ENCODE measurements at regions of chr4 and their contacts with region 1.

Region 1: GRCh38 chr4:1579901-1580691 is 104.0 kb downstream of the FAM53A start:
- DNase-seq: peak; percentile 88 to 97 (median 93)
- ATAC-seq: peak; percentile 82
- H3K4me3 ChIP-seq: peak overlapping the region; percentile 73
- H3K4me3 Mint-ChIP-seq: peak overlapping the region; percentile 86
- H3K27ac ChIP-seq: peak overlapping the region in 1 of 2 donors; percentile 65
- H3K27ac Mint-ChIP-seq: peak overlapping the region; percentile 63
- H3K4me1 ChIP-seq: peaks cover 14% of the 10 kb centered on the region
- H3K4me1 Mint-ChIP-seq: no peaks in the 10 kb centered on the region
- H3K27me3 ChIP-seq: no peaks in the 10 kb centered on the region
- H3K27me3 Mint-ChIP-seq: no peaks in the 10 kb centered on the region
- CTCF ChIP-seq: no peak

Region 2: GRCh38 chr4:1403591-1404572 is 176.2 kb before region 1 on chr4:
- CTCF ChIA-PET with region 1: no interaction called
- POLR2A ChIA-PET with region 1: no interaction called
- intact Hi-C with region 1: no loop called
- DNase-seq: peak in 1 of 14 experiments; percentile 11
- ATAC-seq: no peak
- H3K4me3 ChIP-seq: no peak overlapping the region
- H3K4me3 Mint-ChIP-seq: no peak overlapping the region
- H3K27ac ChIP-seq: no peak overlapping the region
- H3K27ac Mint-ChIP-seq: no peak overlapping the region
- H3K4me1 ChIP-seq: peaks cover 22% of the 10 kb centered on the region
- H3K4me1 Mint-ChIP-seq: no peaks in the 10 kb centered on the region
- H3K27me3 ChIP-seq: peaks cover 42 to 59% of the 10 kb centered on the region in 2 experiments
- H3K27me3 Mint-ChIP-seq: peaks cover 35% of the 10 kb centered on the region
- CTCF ChIP-seq: no peak

Region 3: DNA sequence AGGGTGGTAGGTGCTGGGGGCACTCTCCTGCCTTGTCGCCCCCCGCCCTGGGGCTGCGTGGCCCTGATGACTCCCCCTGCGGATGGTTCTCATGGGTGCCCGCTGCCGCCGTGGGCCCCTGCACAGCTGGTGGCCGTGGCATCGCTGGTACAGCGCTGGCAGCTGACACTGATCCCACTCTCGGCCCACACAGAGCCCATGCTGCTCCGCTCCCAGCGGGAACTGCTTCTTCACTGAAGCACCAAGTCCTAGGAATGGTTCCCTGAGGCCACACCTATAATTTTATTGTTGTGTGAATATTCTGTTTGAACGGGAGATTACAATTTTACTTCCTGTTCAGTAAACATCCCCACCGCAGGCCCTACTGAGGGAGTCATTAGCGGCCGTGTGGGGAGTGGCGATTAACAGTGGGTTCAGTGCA is 35.2 kb before region 1 on chr4:
- CTCF ChIA-PET with region 1: no interaction called
- POLR2A ChIA-PET with region 1: no interaction called
- intact Hi-C with region 1: loop called in 1 of 2 experiments (anchors 2 kb)
- DNase-seq: peak in 6 of 14 experiments; percentile 16 to 65 (median 34)
- ATAC-seq: peak; percentile 38
- H3K4me3 ChIP-seq: no peak overlapping the region
- H3K4me3 Mint-ChIP-seq: peak overlapping the region; percentile 66
- H3K27ac ChIP-seq: no peak overlapping the region
- H3K27ac Mint-ChIP-seq: peak overlapping the region; percentile 85
- H3K4me1 ChIP-seq: peaks cover 54% of the 10 kb centered on the region
- H3K4me1 Mint-ChIP-seq: peaks cover 18% of the 10 kb centered on the region
- H3K27me3 ChIP-seq: no peaks in the 10 kb centered on the region
- H3K27me3 Mint-ChIP-seq: peaks cover 7% of the 10 kb centered on the region
- CTCF ChIP-seq: no peak

Region 4: GRCh38 chr4:1604711-1605205 is 24.7 kb after region 1 on chr4:
- CTCF ChIA-PET with region 1: no interaction called
- POLR2A ChIA-PET with region 1: interaction called, 28 read pairs
- intact Hi-C with region 1: loop called in 1 of 2 experiments (anchors 1 kb)
- DNase-seq: peak in 11 of 14 experiments; percentile 39 to 87 (median 63)
- ATAC-seq: peak; percentile 80
- H3K4me3 ChIP-seq: peak overlapping the region; percentile 43
- H3K4me3 Mint-ChIP-seq: peak overlapping the region; percentile 74
- H3K27ac ChIP-seq: peak overlapping the region in 1 of 2 donors; percentile 29
- H3K27ac Mint-ChIP-seq: peak overlapping the region; percentile 85
- H3K4me1 ChIP-seq: peaks cover 46% of the 10 kb centered on the region
- H3K4me1 Mint-ChIP-seq: peaks cover 21% of the 10 kb centered on the region
- H3K27me3 ChIP-seq: no peaks in the 10 kb centered on the region
- H3K27me3 Mint-ChIP-seq: no peaks in the 10 kb centered on the region
- CTCF ChIP-seq: peak; percentile 52

Region 5: GRCh38 chr4:1666391-1666790 is 86.3 kb after region 1 on chr4:
- CTCF ChIA-PET with region 1: no interaction called
- POLR2A ChIA-PET with region 1: no interaction called
- intact Hi-C with region 1: no loop called
- DNase-seq: no peak
- ATAC-seq: no peak
- H3K4me3 ChIP-seq: no peak overlapping the region
- H3K4me3 Mint-ChIP-seq: no peak overlapping the region
- H3K27ac ChIP-seq: no peak overlapping the region
- H3K27ac Mint-ChIP-seq: no peak overlapping the region
- H3K4me1 ChIP-seq: no peaks in the 10 kb centered on the region
- H3K4me1 Mint-ChIP-seq: no peaks in the 10 kb centered on the region
- H3K27me3 ChIP-seq: no peaks in the 10 kb centered on the region
- H3K27me3 Mint-ChIP-seq: no peaks in the 10 kb centered on the region
- CTCF ChIP-seq: no peak

Region 6: GRCh38 chr4:1683736-1684505 is 103.8 kb after region 1 on chr4 and contains the start of gene FAM53A:
- CTCF ChIA-PET with region 1: no interaction called
- POLR2A ChIA-PET with region 1: no interaction called
- intact Hi-C with region 1: loop called in 1 of 2 experiments (anchors 2 kb)
- DNase-seq: peak in 11 of 14 experiments; percentile 7 to 96 (median 41)
- ATAC-seq: peak; percentile 91
- H3K4me3 ChIP-seq: peak within 1 kb of the TSS; percentile 58
- H3K4me3 Mint-ChIP-seq: peak within 1 kb of the TSS; percentile 93
- H3K27ac ChIP-seq: no peak within 1 kb of the TSS
- H3K27ac Mint-ChIP-seq: peak within 1 kb of the TSS; percentile 85
- H3K4me1 ChIP-seq: peaks cover 19% of the 10 kb centered on the region
- H3K4me1 Mint-ChIP-seq: peaks cover 13% of the 10 kb centered on the region
- H3K27me3 ChIP-seq: no peaks in the 10 kb centered on the region
- H3K27me3 Mint-ChIP-seq: no peaks in the 10 kb centered on the region
- CTCF ChIP-seq: no peak
- total RNA-seq, gene FAM53A: 0.93 to 2.4 TPM

Region 7: DNA sequence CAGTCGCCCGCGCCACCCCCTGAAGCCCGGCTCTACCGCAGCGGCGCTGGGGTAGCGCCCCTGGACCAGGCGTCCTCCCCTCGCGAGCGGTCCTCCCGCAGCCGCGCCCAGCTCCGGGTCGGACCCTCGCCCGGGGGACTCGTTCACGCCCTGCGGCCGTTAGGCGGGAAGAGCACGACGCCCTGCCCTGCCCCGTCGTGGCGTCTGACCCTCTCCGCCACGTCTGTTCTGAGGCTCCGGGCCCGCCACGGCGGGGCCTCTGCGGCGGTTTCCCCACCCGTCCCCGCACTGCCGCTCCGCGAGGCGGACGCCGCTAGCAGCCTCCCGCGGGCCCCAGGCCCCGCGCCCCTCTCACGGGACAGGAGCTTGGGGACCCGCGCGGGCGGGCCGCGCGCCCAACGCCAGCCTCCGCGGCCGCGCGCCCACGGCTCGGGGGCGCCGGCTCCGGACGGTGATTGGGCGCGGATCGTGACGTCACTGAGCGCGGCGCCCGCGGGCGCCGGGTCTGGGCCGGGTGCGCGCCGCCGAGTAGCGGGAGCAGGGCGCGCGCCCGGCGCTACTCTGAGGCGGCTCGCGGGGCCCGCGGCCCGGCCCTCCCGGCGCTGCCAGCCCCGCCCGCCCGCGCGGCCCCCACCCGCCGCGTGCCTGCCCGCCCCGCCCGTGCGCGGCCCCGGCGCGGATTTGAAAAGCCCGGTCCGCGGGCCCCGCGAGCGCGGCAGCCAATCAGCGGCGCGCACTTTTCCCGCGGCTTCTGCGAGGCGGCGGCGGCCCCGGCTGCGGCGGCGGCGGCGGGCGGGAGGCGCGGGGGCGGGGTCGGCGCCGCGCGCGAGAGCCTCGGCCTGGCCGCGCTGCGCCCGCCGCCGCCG is 290.7 kb after region 1 on chr4 and contains the start of gene NSD2:
- CTCF ChIA-PET with region 1: no interaction called
- POLR2A ChIA-PET with region 1: no interaction called
- intact Hi-C with region 1: loop called in 1 of 2 experiments (anchors 2 kb)
- DNase-seq: peak; percentile 80 to 97 (median 88)
- ATAC-seq: peak; percentile 63
- H3K4me3 ChIP-seq: peak within 1 kb of the TSS; percentile 63
- H3K4me3 Mint-ChIP-seq: peak within 1 kb of the TSS; percentile 92
- H3K27ac ChIP-seq: peak within 1 kb of the TSS; percentile 79 to 94
- H3K27ac Mint-ChIP-seq: peak within 1 kb of the TSS; percentile 89
- H3K4me1 ChIP-seq: peaks cover 29% of the 10 kb centered on the region
- H3K4me1 Mint-ChIP-seq: peaks cover 34% of the 10 kb centered on the region
- H3K27me3 ChIP-seq: no peaks in the 10 kb centered on the region
- H3K27me3 Mint-ChIP-seq: peaks cover 5% of the 10 kb centered on the region
- CTCF ChIP-seq: no peak
- total RNA-seq, gene NSD2: 42.4 to 45.8 TPM

Measured in CD4-positive, alpha-beta T cell (primary cell).